ENCODE measurements at regions of chr2 and their contacts with region 1.

Region 1: DNA sequence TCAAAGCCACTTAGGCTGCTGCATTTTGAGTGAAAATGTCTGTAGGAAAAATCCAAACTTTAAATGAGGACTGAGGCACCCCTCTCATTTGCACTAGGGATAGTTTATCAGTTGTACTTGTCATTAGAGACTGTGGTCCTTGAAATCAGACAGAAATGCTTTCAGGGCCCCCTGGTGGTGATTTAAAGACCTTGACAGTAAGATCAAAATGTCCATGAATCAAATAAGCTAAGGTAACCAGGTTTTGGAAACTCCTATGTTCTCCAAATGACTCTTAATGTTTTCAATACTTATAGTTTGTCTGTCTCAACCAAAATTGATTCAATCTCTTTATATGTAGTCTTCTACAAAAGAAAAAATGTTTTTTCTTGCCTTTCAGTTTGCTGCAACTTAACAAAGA is 28.8 kb upstream of the DDX18 start:
- DNase-seq: peak; percentile 59
- ATAC-seq: peak; percentile 83
- H3K4me3 ChIP-seq: no peak overlapping the region
- H3K27ac ChIP-seq: no peak overlapping the region
- H3K4me1 ChIP-seq: no peaks in the 10 kb centered on the region
- H3K27me3 ChIP-seq: no peaks in the 10 kb centered on the region
- CTCF ChIP-seq: peak; percentile 73
- EP300 ChIP-seq: no peak
- POLR2A ChIP-seq: no peak
- RAD21 ChIP-seq: peak; percentile 31; the same call in 1 of the 2 replicates

Region 2: DNA sequence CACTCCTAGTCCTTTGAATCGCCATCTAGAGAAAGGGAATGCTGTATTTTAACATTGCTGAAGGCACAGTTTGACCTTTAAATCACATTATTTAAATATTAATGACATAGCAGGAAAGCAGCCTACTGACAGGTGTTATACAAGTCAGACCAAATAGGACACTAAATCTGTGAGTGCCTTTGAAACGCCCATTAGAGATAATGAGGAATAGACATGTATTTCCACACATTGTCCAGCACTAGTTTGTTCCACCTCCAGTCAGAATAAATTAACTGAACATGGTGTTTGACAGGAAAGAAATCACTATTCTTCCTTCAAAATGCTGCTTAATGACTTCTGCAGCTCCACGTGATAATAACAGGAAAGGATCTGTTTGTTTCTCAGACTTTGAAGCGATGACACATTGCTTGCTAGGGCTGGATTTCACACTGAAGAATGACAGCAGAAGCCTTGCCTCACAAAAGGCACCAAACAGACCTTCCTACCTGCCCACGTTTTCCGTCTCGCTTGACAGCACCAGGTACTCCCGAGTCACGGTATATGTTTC is 61.8 kb before region 1 on chr2:
- CTCF ChIA-PET with region 1: no interaction called
- POLR2A ChIA-PET with region 1: no interaction called
- in situ Hi-C with region 1: no loop called
- intact Hi-C with region 1: loop called (anchors 2 kb)
- DNase-seq: no peak
- ATAC-seq: no peak
- H3K4me3 ChIP-seq: no peak overlapping the region
- H3K27ac ChIP-seq: no peak overlapping the region
- H3K4me1 ChIP-seq: peaks cover 14% of the 10 kb centered on the region
- H3K27me3 ChIP-seq: no peaks in the 10 kb centered on the region
- CTCF ChIP-seq: no peak
- EP300 ChIP-seq: no peak
- POLR2A ChIP-seq: no peak
- RAD21 ChIP-seq: no peak

Region 3: GRCh38 chr2:117753857-117754256 is 31.9 kb before region 1 on chr2:
- CTCF ChIA-PET with region 1: no interaction called
- POLR2A ChIA-PET with region 1: no interaction called
- in situ Hi-C with region 1: no loop called
- intact Hi-C with region 1: no loop called
- DNase-seq: no peak
- ATAC-seq: no peak
- H3K4me3 ChIP-seq: no peak overlapping the region
- H3K27ac ChIP-seq: no peak overlapping the region
- H3K4me1 ChIP-seq: no peaks in the 10 kb centered on the region
- H3K27me3 ChIP-seq: no peaks in the 10 kb centered on the region
- CTCF ChIP-seq: no peak
- EP300 ChIP-seq: no peak
- POLR2A ChIP-seq: no peak
- RAD21 ChIP-seq: no peak

Region 4: DNA sequence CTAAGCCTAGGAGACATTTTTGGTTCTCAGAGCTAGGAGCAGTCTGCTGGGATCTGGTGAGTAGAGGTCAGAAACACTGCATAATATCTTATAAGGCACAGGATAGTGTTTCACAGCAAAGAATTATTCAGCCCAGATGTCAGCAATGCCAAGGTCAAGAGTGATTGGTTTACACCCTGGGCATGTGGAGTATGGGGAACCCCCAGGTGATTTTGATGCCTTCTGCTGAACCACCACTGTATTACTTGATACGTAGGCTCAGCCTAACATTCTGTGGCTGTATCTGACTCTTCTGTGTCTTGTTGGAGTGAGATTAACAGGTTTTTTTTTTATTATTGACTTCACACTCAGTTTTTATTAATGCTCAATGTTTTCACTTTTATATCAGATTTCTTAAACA is 34.7 kb after region 1 on chr2:
- CTCF ChIA-PET with region 1: no interaction called
- POLR2A ChIA-PET with region 1: no interaction called
- in situ Hi-C with region 1: no loop called
- intact Hi-C with region 1: no loop called
- DNase-seq: no peak
- ATAC-seq: no peak
- H3K4me3 ChIP-seq: no peak overlapping the region
- H3K27ac ChIP-seq: no peak overlapping the region
- H3K4me1 ChIP-seq: peaks cover 31% of the 10 kb centered on the region
- H3K27me3 ChIP-seq: no peaks in the 10 kb centered on the region
- CTCF ChIP-seq: no peak
- EP300 ChIP-seq: no peak
- POLR2A ChIP-seq: no peak
- RAD21 ChIP-seq: no peak

Region 5: DNA sequence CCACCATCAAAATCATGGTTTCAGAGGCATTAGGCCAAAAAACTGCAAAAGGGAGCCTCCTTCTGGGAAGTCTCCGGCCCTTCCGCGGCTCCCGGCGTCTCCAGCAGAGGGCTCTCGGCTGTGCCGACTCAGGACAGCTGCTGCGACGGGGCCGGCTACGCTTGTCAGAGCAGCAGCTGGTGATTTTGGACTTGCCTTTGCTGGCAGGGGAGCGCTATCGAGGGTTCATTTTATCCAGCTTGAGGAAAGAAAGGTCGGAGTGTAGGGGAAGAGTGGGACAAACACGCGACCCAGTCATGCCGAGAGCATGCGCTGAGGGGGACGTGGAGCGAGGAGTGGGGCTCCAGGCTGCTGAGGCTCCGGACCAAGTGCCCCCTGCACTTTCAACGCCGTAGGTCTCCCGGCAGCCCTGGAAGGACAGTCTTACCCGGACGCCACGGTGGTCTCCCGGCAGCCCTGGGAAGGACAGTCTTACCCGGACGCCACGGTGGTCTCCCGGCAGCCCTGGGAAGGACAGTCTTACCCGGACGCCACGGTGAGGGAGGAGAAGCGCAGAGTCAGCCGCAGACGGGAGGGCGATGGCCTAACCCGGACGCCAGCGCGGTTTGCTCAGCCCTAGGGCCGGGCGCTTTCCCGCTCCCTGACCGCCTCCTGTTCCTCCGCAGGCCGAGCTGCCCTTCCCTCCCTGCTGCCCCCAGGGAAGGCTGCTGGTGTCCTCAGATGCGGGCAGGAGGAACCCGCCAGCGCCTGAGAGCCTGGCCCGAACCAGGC is 50.4 kb after region 1 on chr2:
- CTCF ChIA-PET with region 1: no interaction called
- POLR2A ChIA-PET with region 1: no interaction called
- in situ Hi-C with region 1: no loop called
- intact Hi-C with region 1: no loop called
- DNase-seq: peak; percentile 54
- ATAC-seq: peak; percentile 92
- H3K4me3 ChIP-seq: peak overlapping the region in 2 of 3 experiments; percentile 19 to 62; a peak in 3 of 6 replicates
- H3K27ac ChIP-seq: no peak overlapping the region
- H3K4me1 ChIP-seq: no peaks in the 10 kb centered on the region
- H3K27me3 ChIP-seq: no peaks in the 10 kb centered on the region
- CTCF ChIP-seq: peak; percentile 80
- EP300 ChIP-seq: no peak
- POLR2A ChIP-seq: no peak; a peak in 1 of 4 replicates
- RAD21 ChIP-seq: peak; percentile 80

Region 6: DNA sequence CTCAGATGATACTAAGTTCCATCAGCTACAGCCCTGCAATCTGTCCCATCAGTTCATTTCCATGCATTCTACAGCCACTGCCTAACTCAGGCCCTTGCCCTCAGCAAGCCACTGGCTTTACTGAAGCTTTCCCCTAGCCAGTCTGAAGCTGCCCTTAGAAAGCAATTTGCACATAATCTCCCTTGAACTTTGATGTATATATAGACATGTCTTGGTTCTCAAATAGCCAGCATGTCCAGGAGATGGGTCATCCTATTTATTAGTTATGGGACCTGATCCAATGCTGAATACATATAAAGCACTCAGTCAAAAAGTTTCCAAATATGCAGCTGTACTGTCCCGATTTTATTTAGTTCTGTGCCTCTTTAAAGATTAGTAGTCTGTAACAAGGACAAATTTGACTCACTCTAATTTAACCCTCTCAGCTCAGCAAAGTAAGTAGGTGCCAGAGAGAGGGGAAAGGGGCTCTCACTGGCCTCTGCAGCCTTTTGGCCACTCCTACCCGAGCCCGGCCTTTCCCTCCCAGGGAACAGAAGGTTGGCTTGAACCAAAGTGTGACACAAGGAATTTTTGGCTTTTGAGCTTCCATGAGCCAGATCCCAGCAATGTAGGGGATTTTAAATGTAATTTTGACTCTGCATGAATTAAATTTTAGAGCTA is 157.4 kb after region 1 on chr2:
- CTCF ChIA-PET with region 1: no interaction called
- POLR2A ChIA-PET with region 1: no interaction called
- in situ Hi-C with region 1: no loop called
- intact Hi-C with region 1: no loop called
- DNase-seq: no peak
- ATAC-seq: no peak
- H3K4me3 ChIP-seq: no peak overlapping the region
- H3K27ac ChIP-seq: no peak overlapping the region
- H3K4me1 ChIP-seq: no peaks in the 10 kb centered on the region
- H3K27me3 ChIP-seq: no peaks in the 10 kb centered on the region
- CTCF ChIP-seq: no peak
- EP300 ChIP-seq: no peak
- POLR2A ChIP-seq: no peak
- RAD21 ChIP-seq: no peak

Measured in HepG2 (cell line).